ENCODE measurements at regions of chr15 and their contacts with region 1.

Region 1: DNA sequence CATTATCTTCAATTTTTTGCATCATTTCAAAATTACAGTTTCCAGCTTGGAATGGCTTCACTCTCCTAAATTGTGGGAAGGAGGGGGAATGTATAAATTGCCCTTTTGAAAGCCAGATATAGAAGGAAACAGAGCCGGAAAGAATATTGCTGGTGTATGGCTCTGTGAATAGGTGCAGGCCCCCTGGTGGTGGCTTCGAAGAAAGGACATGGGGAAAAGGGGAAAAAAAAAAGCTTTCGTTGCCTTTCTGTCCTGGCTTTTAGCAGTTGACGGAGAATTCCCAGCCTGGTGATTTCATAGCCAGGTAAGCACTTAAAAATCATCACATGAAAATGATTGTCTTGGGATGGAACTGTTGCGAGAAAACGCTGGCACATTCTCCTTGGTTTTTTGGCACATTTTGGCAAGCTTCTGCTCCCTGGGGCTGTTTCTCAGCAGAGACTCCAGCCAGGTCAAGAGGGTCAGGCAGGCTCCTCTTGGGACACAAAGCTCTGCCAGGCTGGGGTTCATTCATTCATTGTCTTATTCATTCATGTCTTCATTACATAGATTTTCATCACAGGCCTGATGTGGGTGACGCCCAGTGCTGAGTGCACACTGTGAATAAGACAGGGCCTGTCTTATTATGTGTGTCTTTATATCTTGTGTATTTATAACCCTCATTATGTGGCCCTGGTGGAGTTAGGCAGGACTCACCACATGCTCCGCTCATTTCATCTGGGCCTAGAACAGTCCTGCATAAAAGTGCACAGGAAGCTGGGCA is 300.0 kb upstream of the TPM1 start:
- DNase-seq: peak in 40 of 42 donors; percentile 49 to 88 (median 73)

Region 2: GRCh38 chr15:62389885-62390790 is 352.5 kb before region 1 on chr15:
- intact Hi-C with region 1: loop called (anchors 10 kb)
- DNase-seq: peak; percentile 17 to 87 (median 74)

Region 3: GRCh38 chr15:62985768-62986167 is 243.2 kb after region 1 on chr15:
- intact Hi-C with region 1: no loop called
- DNase-seq: no peak

Measured in head of caudate nucleus (tissue), 42 donors.